Esophagus muscularis mucosa (tissue), 4 donors: ENCODE measurements at regions of chr11 and their contacts with region 1.

Region 1: DNA sequence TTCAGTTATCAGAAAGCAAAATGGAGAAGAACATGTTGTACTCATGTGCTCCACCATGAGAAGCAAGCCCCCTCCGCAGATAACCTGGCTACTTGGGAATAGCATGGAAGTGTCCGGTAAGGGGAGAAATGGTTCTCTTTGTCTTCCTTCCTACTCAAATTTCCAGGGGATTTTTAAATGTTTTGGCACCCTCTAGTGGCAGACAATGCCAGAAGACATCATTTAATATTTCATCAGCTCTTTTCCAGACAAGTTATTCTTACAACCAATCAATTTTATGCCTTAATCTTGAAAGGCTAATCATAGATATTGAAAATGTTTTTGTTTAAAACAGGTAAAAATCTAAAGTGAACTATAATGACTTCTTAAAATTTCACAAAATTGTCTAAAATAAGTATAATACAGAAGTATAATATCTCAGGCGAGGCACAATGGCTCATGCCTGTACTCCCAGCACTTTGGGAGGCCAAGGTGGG is 15.7 kb downstream of the CRTAM start:
- DNase-seq: no peak
- H3K4me3 ChIP-seq: no peak overlapping the region
- H3K27ac ChIP-seq: no peak overlapping the region
- H3K4me1 ChIP-seq: no peaks in the 10 kb centered on the region
- H3K27me3 ChIP-seq: peaks cover 0 to 26% (median 0%) of the 10 kb centered on the region in 4 donors
- CTCF ChIP-seq: peak; percentile 64 to 70 (median 70)
- EP300 ChIP-seq: no peak
- POLR2A ChIP-seq: no peak

Region 2: DNA sequence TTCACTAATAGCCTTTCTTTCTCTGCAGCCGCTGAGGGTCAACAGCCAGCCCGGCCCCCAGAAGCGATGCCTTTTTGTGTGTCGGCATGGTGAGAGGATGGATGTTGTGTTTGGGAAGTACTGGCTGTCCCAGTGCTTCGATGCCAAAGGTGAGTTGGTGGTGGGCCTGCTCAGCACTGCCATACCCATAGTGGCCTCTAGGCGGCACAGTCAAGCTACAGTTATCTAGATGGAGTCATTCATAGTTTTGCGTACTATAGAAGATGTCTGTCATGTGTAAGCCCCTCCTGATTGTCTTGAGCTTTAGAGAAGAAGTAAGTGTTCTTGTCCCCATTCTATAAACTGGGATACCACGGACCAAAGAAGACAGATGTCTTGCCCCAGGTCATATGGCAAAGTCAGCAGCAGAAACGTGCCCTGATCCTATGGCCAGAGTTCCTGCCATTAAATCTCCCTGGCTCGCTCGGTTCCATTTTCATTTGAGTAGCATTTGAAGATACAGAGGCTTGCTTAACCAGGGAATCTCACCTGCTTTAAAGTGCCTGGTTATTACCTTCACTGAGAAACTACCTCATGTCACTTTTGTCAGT is 57.8 kb before region 1 on chr11:
- intact Hi-C with region 1: loop called (anchors 5 kb)
- DNase-seq: no peak
- H3K4me3 ChIP-seq: no peak overlapping the region
- H3K27ac ChIP-seq: no peak overlapping the region
- H3K4me1 ChIP-seq: peaks cover 0 to 4% (median 2%) of the 10 kb centered on the region in 4 donors
- H3K27me3 ChIP-seq: no peaks in the 10 kb centered on the region
- CTCF ChIP-seq: peak; percentile 50 to 75 (median 52)
- EP300 ChIP-seq: no peak
- POLR2A ChIP-seq: no peak

Region 3: GRCh38 chr11:122920579-122920978 is 66.6 kb after region 1 on chr11:
- intact Hi-C with region 1: no loop called
- DNase-seq: no peak
- H3K4me3 ChIP-seq: no peak overlapping the region
- H3K27ac ChIP-seq: no peak overlapping the region
- H3K4me1 ChIP-seq: peaks cover 0 to 9% (median 3%) of the 10 kb centered on the region in 4 donors
- H3K27me3 ChIP-seq: no peaks in the 10 kb centered on the region
- CTCF ChIP-seq: no peak
- EP300 ChIP-seq: no peak
- POLR2A ChIP-seq: no peak